AG04449 (cell line): ENCODE measurements at regions of chr5 and their contacts with region 1.

Region 1: DNA sequence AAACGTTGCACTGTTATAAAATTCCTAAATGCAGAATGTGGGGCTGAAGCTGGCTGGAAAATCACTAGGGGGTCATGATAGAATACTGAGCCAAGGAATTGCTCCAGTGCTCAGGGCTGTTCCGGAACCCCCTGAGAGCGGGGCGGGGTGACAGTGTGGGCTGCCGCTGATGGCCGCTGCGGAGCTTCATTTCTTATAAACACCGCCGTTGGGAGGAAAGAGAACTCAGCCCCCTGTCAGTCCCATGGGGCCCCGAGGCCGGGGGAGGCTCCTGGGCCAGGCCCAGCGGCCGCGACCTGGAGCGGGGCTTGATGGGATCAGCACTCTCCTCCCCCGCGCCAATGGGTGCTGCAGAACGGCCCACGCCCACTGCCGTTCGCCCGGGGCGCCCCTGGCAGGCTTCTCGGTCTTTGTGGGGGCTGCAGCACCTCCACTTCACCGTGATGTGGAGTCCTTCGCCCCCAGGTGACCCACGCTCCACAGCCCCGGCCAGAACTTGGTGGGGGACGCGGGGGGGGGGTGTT is 5.2 kb upstream of the IRF1 start:
- DNase-seq: no peak
- H3K4me3 ChIP-seq: peak overlapping the region; percentile 69
- CTCF ChIP-seq: peak; percentile 4

Region 2: GRCh38 chr5:132410451-132411381 is 85.0 kb before region 1 on chr5:
- CTCF ChIA-PET with region 1: interaction called, 90 read pairs
- POLR2A ChIA-PET with region 1: interaction called, 14 read pairs
- DNase-seq: no peak
- H3K4me3 ChIP-seq: peak overlapping the region; percentile 69
- CTCF ChIP-seq: peak; percentile 65

Region 3: DNA sequence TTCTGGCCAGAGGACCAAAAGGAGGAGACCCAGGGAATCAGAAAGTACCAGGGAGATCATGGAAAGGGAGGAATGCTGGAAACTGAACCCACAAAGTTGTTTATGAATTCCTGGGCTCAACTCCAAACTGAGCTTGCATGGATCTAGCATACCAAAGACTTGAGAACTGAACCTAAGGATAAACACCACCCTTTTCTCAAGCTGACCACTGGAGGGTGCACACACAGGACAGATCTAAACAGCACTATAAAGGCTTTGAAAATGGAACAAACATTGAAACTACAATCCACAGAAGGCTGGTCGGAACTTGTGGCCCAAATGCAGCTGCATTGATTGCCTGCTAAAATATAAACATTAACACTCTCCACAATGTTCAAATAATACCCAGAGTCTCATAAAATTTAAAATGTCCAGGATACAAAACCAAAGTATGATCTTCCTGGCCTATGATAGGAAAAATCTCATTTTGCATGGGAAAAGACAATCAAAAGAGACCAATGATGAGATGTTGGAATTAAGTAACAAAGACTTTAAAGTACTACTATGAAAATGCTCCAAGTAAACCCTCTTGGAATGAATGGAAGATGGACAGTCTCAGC is 10.5 kb after region 1 on chr5:
- CTCF ChIA-PET with region 1: interaction called, 56 read pairs
- POLR2A ChIA-PET with region 1: interaction called, 12 read pairs
- DNase-seq: peak; percentile 93
- H3K4me3 ChIP-seq: 0 out of 2 replicates have a peak overlapping the region, but pooled peaks have one; percentile 8
- CTCF ChIP-seq: peak; percentile 79